Heart left ventricle (tissue), 16 donors: ENCODE measurements at regions of chr14 and their contacts with region 1.

Region 1: DNA sequence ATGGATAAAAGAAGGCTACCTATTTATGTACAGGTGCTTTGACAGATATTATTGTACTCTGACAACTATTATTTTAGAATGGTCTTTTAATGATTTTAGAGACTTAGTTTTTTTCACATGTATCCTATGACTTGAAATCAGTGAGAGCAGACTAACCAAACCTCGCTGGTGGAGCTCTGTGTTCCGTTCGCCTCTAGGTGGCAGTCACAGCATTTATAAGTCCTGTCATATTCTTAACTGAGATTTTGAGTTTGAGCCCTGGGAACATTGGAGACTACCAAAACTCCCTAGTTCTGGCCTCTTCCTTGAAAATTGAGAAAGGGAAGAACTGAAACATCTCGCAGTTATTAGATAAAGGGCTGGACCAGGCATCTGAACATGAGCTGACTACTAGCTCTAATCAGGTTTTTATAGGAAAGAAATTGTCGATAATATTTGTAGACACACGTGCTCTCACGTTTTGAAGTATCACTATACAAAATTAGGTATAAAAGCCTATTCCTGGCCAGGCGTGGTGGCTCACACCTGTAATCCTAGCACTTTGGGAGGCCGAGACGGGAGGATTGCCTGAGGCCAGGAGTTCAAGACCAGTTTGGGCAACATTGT is 48.3 kb downstream of the TTLL5 start:
- DNase-seq: peak; percentile 60 to 75 (median 69)
- ATAC-seq: peak in 3 of 4 donors; percentile 67 to 73 (median 67)
- H3K4me3 ChIP-seq: no peak overlapping the region
- H3K27ac ChIP-seq: no peak overlapping the region
- H3K4me1 ChIP-seq: peaks cover 0 to 27% (median 13%) of the 10 kb centered on the region in 12 donors
- H3K27me3 ChIP-seq: no peaks in the 10 kb centered on the region
- CTCF ChIP-seq: peak; percentile 71 to 89 (median 78)
- POLR2A ChIP-seq: no peak

Region 2: GRCh38 chr14:75906676-75907280 is 197.5 kb after region 1 on chr14:
- intact Hi-C with region 1: loop called in 9 of 10 experiments (anchors 2 to 10 kb)
- DNase-seq: peak in 4 of 5 donors; percentile 50 to 66 (median 57)
- ATAC-seq: peak in 3 of 4 donors; percentile 32 to 81 (median 65)
- H3K4me3 ChIP-seq: no peak overlapping the region
- H3K27ac ChIP-seq: peak overlapping the region in 2 of 12 donors; percentile 19 to 20
- H3K4me1 ChIP-seq: peaks cover 0 to 26% (median 7%) of the 10 kb centered on the region in 12 donors
- H3K27me3 ChIP-seq: no peaks in the 10 kb centered on the region
- CTCF ChIP-seq: peak; percentile 83 to 97 (median 92)
- POLR2A ChIP-seq: no peak

Region 3: DNA sequence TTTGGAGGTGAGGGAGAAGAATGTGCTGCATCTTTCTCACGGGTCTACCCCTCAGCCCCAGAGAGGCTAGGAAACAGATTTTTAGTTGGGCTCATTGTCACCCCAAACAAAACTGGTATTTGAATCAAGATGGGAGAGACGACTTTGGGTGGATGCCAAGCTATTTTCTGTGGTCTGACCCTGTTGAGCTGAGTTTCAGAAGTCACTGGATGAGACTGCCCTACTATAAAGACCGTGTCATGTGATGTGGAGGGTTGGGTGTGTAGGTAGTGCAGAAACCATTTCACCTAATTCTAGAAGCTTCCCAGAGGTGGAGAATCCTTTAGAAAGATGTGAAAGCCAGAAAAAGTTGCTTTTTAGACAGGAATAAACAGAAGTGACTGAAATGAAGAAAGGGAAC is 336.5 kb after region 1 on chr14:
- intact Hi-C with region 1: loop called in 1 of 10 experiments (anchors 5 kb)
- DNase-seq: no peak
- ATAC-seq: no peak
- H3K4me3 ChIP-seq: no peak overlapping the region
- H3K27ac ChIP-seq: no peak overlapping the region
- H3K4me1 ChIP-seq: no peaks in the 10 kb centered on the region
- H3K27me3 ChIP-seq: no peaks in the 10 kb centered on the region
- CTCF ChIP-seq: no peak
- POLR2A ChIP-seq: no peak

Region 4: GRCh38 chr14:76352639-76353281 is 643.5 kb after region 1 on chr14:
- intact Hi-C with region 1: loop called in 1 of 10 experiments (anchors 10 kb)
- DNase-seq: peak; percentile 37 to 74 (median 56)
- ATAC-seq: peak; percentile 44 to 78 (median 64)
- H3K4me3 ChIP-seq: peak overlapping the region in 10 of 12 donors; percentile 2 to 40 (median 29)
- H3K27ac ChIP-seq: no peak overlapping the region
- H3K4me1 ChIP-seq: peaks cover 0 to 27% (median 11%) of the 10 kb centered on the region in 12 donors
- H3K27me3 ChIP-seq: peaks cover 0 to 7% (median 0%) of the 10 kb centered on the region in 9 donors
- CTCF ChIP-seq: peak; percentile 73 to 95 (median 89)
- POLR2A ChIP-seq: no peak

Region 5: GRCh38 chr14:76647697-76648298 is 938.5 kb after region 1 on chr14:
- intact Hi-C with region 1: loop called in 1 of 10 experiments (anchors 10 kb)
- DNase-seq: peak in 2 of 5 donors; percentile 20 to 31
- ATAC-seq: peak in 3 of 4 donors; percentile 55 to 65 (median 65)
- H3K4me3 ChIP-seq: no peak overlapping the region
- H3K27ac ChIP-seq: no peak overlapping the region
- H3K4me1 ChIP-seq: no peaks in the 10 kb centered on the region
- H3K27me3 ChIP-seq: no peaks in the 10 kb centered on the region
- CTCF ChIP-seq: peak; percentile 68 to 88 (median 80)
- POLR2A ChIP-seq: no peak